OCI-LY7 (cell line): ENCODE measurements at regions of chr10 and their contacts with region 1.

Region 1: GRCh38 chr10:112314822-112315474 is 31.7 kb downstream of the TECTB start:
- DNase-seq: peak; percentile 73
- H3K4me3 ChIP-seq: no peak overlapping the region
- H3K27ac ChIP-seq: no peak overlapping the region
- H3K4me1 ChIP-seq: no peaks in the 10 kb centered on the region
- CTCF ChIP-seq: peak; percentile 97

Region 2: GRCh38 chr10:112115799-112116385 is 199.1 kb before region 1 on chr10:
- CTCF ChIA-PET with region 1: no interaction called
- POLR2A ChIA-PET with region 1: no interaction called
- intact Hi-C with region 1: loop called (anchors 2 kb)
- DNase-seq: peak; percentile 53
- H3K4me3 ChIP-seq: no peak overlapping the region
- H3K27ac ChIP-seq: no peak overlapping the region
- H3K4me1 ChIP-seq: no peaks in the 10 kb centered on the region
- CTCF ChIP-seq: peak; percentile 83

Region 3: GRCh38 chr10:112140110-112140970 is 174.6 kb before region 1 on chr10:
- CTCF ChIA-PET with region 1: no interaction called
- POLR2A ChIA-PET with region 1: no interaction called
- intact Hi-C with region 1: loop called (anchors 1 kb)
- DNase-seq: peak; percentile 80
- H3K4me3 ChIP-seq: no peak overlapping the region
- H3K27ac ChIP-seq: no peak overlapping the region
- H3K4me1 ChIP-seq: no peaks in the 10 kb centered on the region
- CTCF ChIP-seq: peak; percentile 88

Region 4: GRCh38 chr10:112434988-112435619 is 120.2 kb after region 1 on chr10:
- CTCF ChIA-PET with region 1: no interaction called
- POLR2A ChIA-PET with region 1: no interaction called
- intact Hi-C with region 1: loop called (anchors 2 kb)
- DNase-seq: peak; percentile 45
- H3K4me3 ChIP-seq: no peak overlapping the region
- H3K27ac ChIP-seq: no peak overlapping the region
- H3K4me1 ChIP-seq: no peaks in the 10 kb centered on the region
- CTCF ChIP-seq: peak; percentile 80